Activated T-helper 1 cell treated with anti-CD3 and anti-CD28 coated beads, Interleukin-12 subunit alpha, Interleukin-12 subunit beta, Interleukin-2, Interleukin-4 antibody, amounts not matched to agents 30 ng/mL and 10 ng/mL and 1 ng/mL, durations not matched to agents 14 hours and 24 hours and 36 hours (primary cell): ENCODE measurements at regions of chr17 and their contacts with region 1.

Region 1: GRCh38 chr17:65100316-65101140 is 36.6 kb upstream of the RGS9 start:
- DNase-seq: peak; percentile 81
- H3K4me3 Mint-ChIP-seq: peak overlapping the region; percentile 90
- H3K27ac Mint-ChIP-seq: peak overlapping the region; percentile 94
- H3K4me1 Mint-ChIP-seq: peaks cover 20% of the 10 kb centered on the region
- H3K27me3 Mint-ChIP-seq: peaks cover 9% of the 10 kb centered on the region

Region 2: DNA sequence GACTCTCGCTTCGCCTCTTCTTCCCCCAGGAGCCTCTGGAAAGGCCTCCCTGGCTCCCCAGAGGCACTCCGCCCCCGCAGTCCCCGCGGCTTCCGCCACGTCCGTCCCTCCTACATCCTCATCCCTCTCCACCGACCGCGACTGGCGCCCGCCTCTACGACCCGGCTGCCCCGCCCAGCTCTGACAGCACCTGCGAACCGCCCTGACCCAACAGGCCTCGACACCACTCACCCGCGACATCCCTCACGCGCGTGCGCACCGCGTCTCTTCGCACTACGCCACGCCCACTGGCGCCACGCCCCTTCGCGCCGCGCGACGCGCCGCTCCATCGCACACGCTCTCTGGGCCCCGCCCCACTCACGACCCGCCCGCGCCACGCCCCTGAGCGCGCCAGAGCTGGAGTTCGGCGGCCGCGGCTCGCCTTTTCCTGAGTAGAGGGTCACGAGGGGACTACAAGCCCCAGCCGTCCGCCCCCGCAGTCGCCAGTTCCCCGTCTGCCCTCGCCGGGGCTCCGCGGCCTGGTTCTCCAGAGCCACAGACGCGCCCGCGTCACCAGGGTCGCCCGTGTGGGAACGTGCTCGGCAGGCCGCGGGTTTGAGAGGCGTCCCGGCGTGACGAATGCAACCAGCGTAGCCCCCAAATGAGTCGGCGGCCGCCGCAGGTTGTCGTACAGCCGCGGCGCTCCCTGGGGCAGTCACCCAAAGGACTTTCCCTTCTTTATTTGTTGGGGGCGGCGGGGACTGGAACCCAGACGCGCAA is 125.0 kb before region 1 on chr17:
- intact Hi-C with region 1: loop called (anchors 1 kb)
- DNase-seq: peak; percentile 98
- H3K4me3 Mint-ChIP-seq: peak overlapping the region; percentile 74
- H3K27ac Mint-ChIP-seq: peak overlapping the region; percentile 99
- H3K4me1 Mint-ChIP-seq: peaks cover 60% of the 10 kb centered on the region
- H3K27me3 Mint-ChIP-seq: no peaks in the 10 kb centered on the region

Region 3: GRCh38 chr17:65013613-65014391 is 86.7 kb before region 1 on chr17:
- intact Hi-C with region 1: loop called (anchors 5 kb)
- DNase-seq: peak; percentile 13
- H3K4me3 Mint-ChIP-seq: no peak overlapping the region
- H3K27ac Mint-ChIP-seq: peak overlapping the region; percentile 43
- H3K4me1 Mint-ChIP-seq: peaks cover 65% of the 10 kb centered on the region
- H3K27me3 Mint-ChIP-seq: no peaks in the 10 kb centered on the region

Region 4: DNA sequence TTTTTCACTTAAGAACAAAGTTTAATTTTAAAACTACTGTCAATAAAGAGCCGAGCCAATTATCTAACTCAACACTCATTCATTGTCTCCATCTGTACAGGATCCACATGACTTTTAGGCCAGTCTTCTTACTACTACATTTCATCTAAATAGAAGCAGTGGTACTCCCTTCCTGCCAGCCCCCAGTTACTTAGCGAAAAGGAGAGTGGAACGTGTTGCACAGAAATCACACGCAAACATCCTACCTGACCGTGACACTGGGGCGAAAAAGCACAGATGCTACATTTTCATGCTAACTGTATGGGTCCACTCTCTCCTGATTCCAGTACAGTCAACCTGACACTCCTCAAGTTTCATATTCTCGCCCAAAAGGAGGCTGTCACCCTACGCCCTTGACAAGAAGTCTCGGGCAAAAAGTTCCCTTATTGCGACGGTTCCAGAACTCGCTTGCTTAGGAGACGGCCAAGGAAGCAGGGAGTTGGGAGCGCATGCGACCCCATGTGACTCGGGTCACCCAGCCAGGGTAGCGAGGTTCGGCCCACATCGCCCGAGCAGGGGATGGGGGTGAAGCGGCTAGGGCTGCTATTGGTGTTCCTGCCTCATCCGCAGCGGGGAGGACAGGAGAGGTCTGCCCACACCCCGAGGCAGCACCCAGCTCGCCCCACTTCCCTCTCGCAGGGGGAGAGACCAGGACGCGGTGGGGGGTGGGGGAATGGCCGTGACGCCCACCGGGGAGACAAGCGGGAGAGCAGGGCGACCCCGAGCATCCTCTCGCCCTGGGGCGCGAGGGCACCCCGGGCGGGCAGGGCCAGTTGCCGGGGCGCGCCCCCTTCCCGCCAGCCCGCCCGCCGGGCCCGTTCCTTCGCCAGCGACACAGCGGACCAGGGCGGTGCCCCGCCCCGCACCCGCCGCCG is 44.9 kb before region 1 on chr17:
- intact Hi-C with region 1: loop called (anchors 1 kb)
- DNase-seq: peak; percentile 53
- H3K4me3 Mint-ChIP-seq: peak overlapping the region; percentile 94
- H3K27ac Mint-ChIP-seq: peak overlapping the region; percentile 93
- H3K4me1 Mint-ChIP-seq: peaks cover 32% of the 10 kb centered on the region
- H3K27me3 Mint-ChIP-seq: peaks cover 5% of the 10 kb centered on the region

Region 5: GRCh38 chr17:65085397-65085796 is 15.1 kb before region 1 on chr17:
- intact Hi-C with region 1: no loop called
- DNase-seq: no peak
- H3K4me3 Mint-ChIP-seq: no peak overlapping the region
- H3K27ac Mint-ChIP-seq: no peak overlapping the region
- H3K4me1 Mint-ChIP-seq: no peaks in the 10 kb centered on the region
- H3K27me3 Mint-ChIP-seq: peaks cover 16% of the 10 kb centered on the region

Region 6: DNA sequence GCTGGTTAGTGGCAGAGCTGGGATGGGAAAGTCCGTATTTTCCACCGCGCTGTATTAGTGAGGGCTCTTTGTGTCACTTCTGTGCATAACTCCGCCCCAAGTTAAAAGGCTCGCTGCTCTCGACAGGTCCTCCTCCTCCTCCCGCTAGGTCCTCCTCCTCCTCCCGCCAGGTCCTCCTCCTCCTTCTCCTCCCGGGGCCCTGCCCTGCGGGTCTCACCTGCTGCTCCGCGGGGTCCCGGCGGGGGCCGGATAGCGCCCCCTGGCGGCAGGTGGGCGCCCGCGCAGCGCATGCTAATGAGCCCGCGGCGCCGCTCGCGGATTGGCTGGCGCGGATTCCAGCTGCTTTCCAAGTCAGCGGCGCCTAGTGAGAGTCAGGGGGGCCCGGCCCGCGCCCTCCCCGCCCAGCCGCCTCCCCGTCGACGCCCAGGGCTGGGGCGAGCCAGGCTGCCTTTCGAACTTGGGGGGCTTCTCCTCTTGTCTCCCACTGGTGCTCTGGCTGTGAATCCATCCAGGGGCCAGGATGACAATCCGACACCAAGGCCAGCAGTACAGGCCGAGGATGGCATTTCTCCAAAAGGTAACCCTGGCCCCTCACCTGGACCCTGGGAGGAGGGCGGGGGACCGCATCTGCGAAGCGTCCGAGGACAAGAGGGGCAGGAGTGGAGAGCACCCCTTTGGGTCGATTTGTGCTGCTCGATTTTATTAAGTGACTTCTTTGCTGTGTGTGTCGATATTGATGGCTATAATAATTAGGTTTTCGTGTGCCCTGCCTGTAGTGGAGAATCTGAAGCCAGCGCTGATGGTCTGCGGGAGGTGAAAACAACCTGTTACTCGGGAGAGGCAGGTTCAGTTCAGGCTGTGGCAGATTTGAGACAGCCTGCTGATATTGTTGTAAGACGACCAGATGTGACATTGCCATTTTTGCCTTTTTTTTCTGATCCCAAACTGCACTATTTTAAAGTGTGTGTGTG is 36.8 kb after region 1 on chr17 and contains the start of gene RGS9:
- intact Hi-C with region 1: loop called (anchors 1 kb)
- DNase-seq: peak; percentile 85
- H3K4me3 Mint-ChIP-seq: peak within 1 kb of the TSS; percentile 86
- H3K27ac Mint-ChIP-seq: peak within 1 kb of the TSS; percentile 49
- H3K4me1 Mint-ChIP-seq: peaks cover 33% of the 10 kb centered on the region
- H3K27me3 Mint-ChIP-seq: peaks cover 24% of the 10 kb centered on the region
- total RNA-seq, gene RGS9: 1.1 and 1.8 TPM in 2 replicates

Region 7: GRCh38 chr17:65231662-65232335 is 131.3 kb after region 1 on chr17:
- intact Hi-C with region 1: loop called (anchors 1 kb)
- DNase-seq: peak; percentile 42
- H3K4me3 Mint-ChIP-seq: no peak overlapping the region
- H3K27ac Mint-ChIP-seq: no peak overlapping the region
- H3K4me1 Mint-ChIP-seq: peaks cover 34% of the 10 kb centered on the region
- H3K27me3 Mint-ChIP-seq: peaks cover 27% of the 10 kb centered on the region